ENCODE measurements at regions of chr4 and their contacts with region 1.

Region 1: DNA sequence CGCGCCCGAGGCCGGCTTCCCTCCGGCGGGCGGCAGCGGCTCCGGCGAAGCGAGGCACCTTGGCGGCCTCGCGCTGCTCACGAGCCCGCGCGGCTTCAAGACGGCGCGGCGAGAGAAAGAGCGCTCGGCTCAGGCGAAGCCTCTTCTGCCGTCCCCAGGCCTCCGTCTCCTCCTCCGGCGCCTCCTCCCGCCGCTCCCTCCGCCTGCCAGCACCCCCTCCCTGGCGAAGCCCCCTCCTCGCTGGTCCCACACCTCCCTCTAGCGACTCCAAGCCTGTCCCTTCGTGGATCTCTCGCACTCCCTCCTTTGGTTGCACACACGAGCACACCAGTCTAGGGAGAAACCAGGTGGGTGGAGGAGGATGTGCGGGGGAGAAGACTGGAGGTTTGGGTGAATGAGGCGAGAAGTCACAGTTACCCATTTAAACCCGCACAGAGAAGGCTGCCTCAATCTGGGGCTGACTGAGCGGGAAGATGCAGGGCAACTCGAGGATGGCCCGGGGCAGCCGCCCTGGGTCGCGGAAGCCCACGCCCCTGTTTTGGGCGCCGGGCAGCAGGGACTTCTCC is at the start of gene CAMK2D:
- DNase-seq: peak; percentile 90
- H3K4me3 ChIP-seq: peak within 1 kb of the TSS; percentile 57 to 78 (median 70)
- H3K27ac ChIP-seq: peak within 1 kb of the TSS; percentile 97 to 100 (median 98)
- H3K4me1 ChIP-seq: peaks cover 9 to 39% (median 14%) of the 10 kb centered on the region in 4 donors
- H3K27me3 ChIP-seq: no peaks in the 10 kb centered on the region
- CTCF ChIP-seq: peak; percentile 36 to 74 (median 41)
- EP300 ChIP-seq: no peak
- POLR2A ChIP-seq: no peak
- total RNA-seq, gene CAMK2D: 54.5 to 107 (median 84.7) TPM

Region 2: GRCh38 chr4:113547487-113548042 is 214.1 kb before region 1 on chr4:
- in situ Hi-C with region 1: loop called (anchors 10 to 25 kb)
- intact Hi-C with region 1: loop called (anchors 1 kb)
- DNase-seq: peak; percentile 95
- H3K4me3 ChIP-seq: no peak overlapping the region
- H3K27ac ChIP-seq: peak overlapping the region; percentile 76 to 83 (median 80)
- H3K4me1 ChIP-seq: peaks cover 5 to 29% (median 20%) of the 10 kb centered on the region in 4 donors
- H3K27me3 ChIP-seq: no peaks in the 10 kb centered on the region
- CTCF ChIP-seq: peak; percentile 93 to 100 (median 97)
- EP300 ChIP-seq: no peak
- POLR2A ChIP-seq: peak; percentile 10

Region 3: DNA sequence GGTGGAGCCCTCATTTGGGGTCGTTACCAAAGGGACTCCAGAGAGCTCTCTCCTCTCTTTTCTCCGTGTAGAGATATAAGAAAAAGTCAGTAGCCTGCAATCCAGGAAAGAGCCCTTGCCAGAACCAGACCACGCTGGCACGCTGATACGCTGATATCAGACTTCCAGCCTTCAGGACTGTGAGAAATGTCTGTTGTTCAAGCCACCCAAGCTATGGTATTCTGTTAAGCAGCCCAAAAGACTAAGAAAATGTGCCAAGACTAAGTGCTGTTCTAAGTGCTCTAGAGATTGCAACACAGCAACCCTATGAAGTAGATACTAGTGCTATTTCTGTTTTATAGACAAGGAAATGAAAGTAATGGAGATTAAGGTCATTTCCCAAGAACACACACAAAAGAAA is 205.8 kb before region 1 on chr4:
- in situ Hi-C with region 1: loop called in 3 of 4 experiments (anchors 10 to 25 kb)
- intact Hi-C with region 1: no loop called
- DNase-seq: no peak
- H3K4me3 ChIP-seq: no peak overlapping the region
- H3K27ac ChIP-seq: peak overlapping the region; percentile 44 to 77 (median 72)
- H3K4me1 ChIP-seq: peaks cover 4 to 19% (median 8%) of the 10 kb centered on the region in 4 donors
- H3K27me3 ChIP-seq: no peaks in the 10 kb centered on the region
- CTCF ChIP-seq: no peak
- EP300 ChIP-seq: no peak
- POLR2A ChIP-seq: no peak

Region 4: GRCh38 chr4:113574636-113575103 is 187.0 kb before region 1 on chr4:
- in situ Hi-C with region 1: loop called in 2 of 4 experiments (anchors 25 kb)
- intact Hi-C with region 1: no loop called
- DNase-seq: no peak
- H3K4me3 ChIP-seq: no peak overlapping the region
- H3K27ac ChIP-seq: peak overlapping the region in 3 of 4 donors; percentile 23 to 41 (median 28)
- H3K4me1 ChIP-seq: peaks cover 9 to 22% (median 17%) of the 10 kb centered on the region in 4 donors
- H3K27me3 ChIP-seq: no peaks in the 10 kb centered on the region
- CTCF ChIP-seq: no peak
- EP300 ChIP-seq: no peak
- POLR2A ChIP-seq: no peak

Region 5: DNA sequence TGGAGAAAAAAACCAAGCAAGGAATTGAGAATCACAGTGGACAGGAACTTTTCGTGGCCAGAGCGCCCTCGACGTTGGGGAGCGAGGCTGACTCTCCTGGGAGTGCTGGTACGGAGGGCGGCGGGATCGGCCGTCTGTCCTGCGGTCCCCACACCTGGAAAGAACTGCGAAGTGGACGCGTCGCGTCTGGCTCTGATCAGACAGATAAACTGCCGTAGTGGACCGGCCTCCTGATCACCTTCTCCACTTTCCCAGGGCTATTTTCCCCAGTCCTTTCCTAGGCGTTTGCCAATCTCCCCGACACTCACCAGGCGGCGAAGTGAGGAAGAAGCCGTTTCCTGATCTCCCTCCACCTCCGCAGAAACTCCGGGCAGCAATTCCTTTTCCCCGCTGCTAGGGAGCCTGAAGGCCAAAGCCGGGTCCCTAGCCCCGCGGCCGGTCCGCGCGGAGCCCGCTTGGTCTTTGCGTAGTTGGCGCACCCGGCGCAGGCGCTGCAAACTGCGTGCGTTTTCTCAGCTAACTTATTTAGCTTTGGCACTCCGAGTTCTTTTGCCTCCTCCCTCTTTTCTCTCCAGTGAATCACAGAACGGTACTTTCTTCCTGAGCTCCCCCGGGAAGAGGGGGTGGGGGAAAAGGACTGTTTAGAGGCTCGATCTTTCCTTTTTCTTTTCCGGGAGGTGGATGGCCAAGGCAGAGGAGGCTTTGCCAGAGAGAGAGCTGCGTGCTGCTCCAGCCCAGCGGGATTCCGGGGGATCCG is 217.6 kb after region 1 on chr4 and contains the start of gene ARSJ:
- in situ Hi-C with region 1: no loop called
- intact Hi-C with region 1: loop called (anchors 10 kb)
- DNase-seq: peak; percentile 54
- H3K4me3 ChIP-seq: peak within 1 kb of the TSS; percentile 49 to 81 (median 63)
- H3K27ac ChIP-seq: peak within 1 kb of the TSS; percentile 80 to 86 (median 84)
- H3K4me1 ChIP-seq: peaks cover 0 to 20% (median 0%) of the 10 kb centered on the region in 4 donors
- H3K27me3 ChIP-seq: peaks cover 3% of the 10 kb centered on the region
- CTCF ChIP-seq: peak in 2 of 5 experiments; percentile 4 to 14
- EP300 ChIP-seq: no peak
- POLR2A ChIP-seq: peak; percentile 56
- total RNA-seq, gene ARSJ: 1.8 to 5.2 (median 2.8) TPM

Measured in transverse colon (tissue), 4 donors.